IMR-90 (cell line): ENCODE measurements at regions of chrX and their contacts with region 1.

Region 1: GRCh38 chrX:114028907-114029662 is 554.8 kb upstream of the HTR2C start:
- DNase-seq: no peak
- ATAC-seq: no peak
- H3K4me3 ChIP-seq: no peak overlapping the region
- H3K27ac ChIP-seq: no peak overlapping the region
- H3K4me1 ChIP-seq: no peaks in the 10 kb centered on the region
- H3K27me3 ChIP-seq: no peaks in the 10 kb centered on the region
- CTCF ChIP-seq: no peak
- POLR2A ChIP-seq: no peak
- RAD21 ChIP-seq: no peak

Region 2: GRCh38 chrX:113741744-113742143 is 287.3 kb before region 1 on chrX:
- CTCF ChIA-PET with region 1: no interaction called
- POLR2A ChIA-PET with region 1: no interaction called
- dilution Hi-C with region 1: no loop called
- in situ Hi-C with region 1: no loop called
- intact Hi-C with region 1: no loop called
- DNase-seq: no peak
- ATAC-seq: no peak
- H3K4me3 ChIP-seq: no peak overlapping the region
- H3K27ac ChIP-seq: no peak overlapping the region
- H3K4me1 ChIP-seq: no peaks in the 10 kb centered on the region
- H3K27me3 ChIP-seq: no peaks in the 10 kb centered on the region; the same call in 1 of the 2 replicates
- CTCF ChIP-seq: no peak
- POLR2A ChIP-seq: no peak
- RAD21 ChIP-seq: no peak

Region 3: DNA sequence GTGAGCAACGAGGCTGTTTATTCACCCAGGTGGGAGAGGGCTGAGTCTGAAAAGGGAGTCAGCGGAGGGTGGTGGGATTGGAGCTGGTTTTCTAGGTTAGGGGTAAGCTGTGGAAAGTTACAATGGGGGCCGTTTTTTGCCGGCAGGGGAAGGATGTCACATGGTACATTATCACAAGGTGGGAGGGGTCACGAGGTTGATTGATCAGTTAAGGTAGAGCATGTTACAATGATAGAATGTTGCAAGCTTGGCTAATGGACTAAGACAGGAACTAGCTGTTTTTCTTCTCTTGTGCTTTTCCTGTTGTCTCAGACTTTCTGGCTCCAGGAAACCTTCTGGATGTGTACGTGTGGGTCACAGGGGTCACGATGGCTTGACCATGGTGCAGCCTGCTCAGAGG is 18.5 kb after region 1 on chrX:
- CTCF ChIA-PET with region 1: no interaction called
- POLR2A ChIA-PET with region 1: no interaction called
- dilution Hi-C with region 1: no loop called
- in situ Hi-C with region 1: no loop called
- intact Hi-C with region 1: no loop called
- DNase-seq: no peak
- ATAC-seq: no peak
- H3K4me3 ChIP-seq: no peak overlapping the region
- H3K27ac ChIP-seq: no peak overlapping the region
- H3K4me1 ChIP-seq: no peaks in the 10 kb centered on the region
- H3K27me3 ChIP-seq: no peaks in the 10 kb centered on the region
- CTCF ChIP-seq: no peak
- POLR2A ChIP-seq: no peak
- RAD21 ChIP-seq: no peak

Region 4: GRCh38 chrX:114650351-114650750 is 621.3 kb after region 1 on chrX:
- CTCF ChIA-PET with region 1: no interaction called
- POLR2A ChIA-PET with region 1: no interaction called
- dilution Hi-C with region 1: no loop called
- in situ Hi-C with region 1: no loop called
- intact Hi-C with region 1: loop called (anchors 5 kb)
- DNase-seq: no peak
- ATAC-seq: no peak
- H3K4me3 ChIP-seq: no peak overlapping the region
- H3K27ac ChIP-seq: no peak overlapping the region
- H3K4me1 ChIP-seq: no peaks in the 10 kb centered on the region
- H3K27me3 ChIP-seq: no peaks in the 10 kb centered on the region
- CTCF ChIP-seq: no peak
- POLR2A ChIP-seq: no peak
- RAD21 ChIP-seq: no peak